ENCODE measurements at regions of chr5 and their contacts with region 1.

Region 1: GRCh38 chr5:42057254-42057690 is 132.2 kb downstream of the FBXO4 start:
- DNase-seq: peak; percentile 25
- ATAC-seq: peak; percentile 61; the same call in 1 of the 2 replicates
- H3K4me3 ChIP-seq: no peak overlapping the region
- H3K27ac ChIP-seq: no peak overlapping the region
- H3K4me1 ChIP-seq: no peaks in the 10 kb centered on the region
- H3K27me3 ChIP-seq: no peaks in the 10 kb centered on the region
- CTCF ChIP-seq: peak; percentile 61
- POLR2A ChIP-seq: no peak
- RAD21 ChIP-seq: peak; percentile 53; the same call in 1 of the 2 replicates

Region 2: DNA sequence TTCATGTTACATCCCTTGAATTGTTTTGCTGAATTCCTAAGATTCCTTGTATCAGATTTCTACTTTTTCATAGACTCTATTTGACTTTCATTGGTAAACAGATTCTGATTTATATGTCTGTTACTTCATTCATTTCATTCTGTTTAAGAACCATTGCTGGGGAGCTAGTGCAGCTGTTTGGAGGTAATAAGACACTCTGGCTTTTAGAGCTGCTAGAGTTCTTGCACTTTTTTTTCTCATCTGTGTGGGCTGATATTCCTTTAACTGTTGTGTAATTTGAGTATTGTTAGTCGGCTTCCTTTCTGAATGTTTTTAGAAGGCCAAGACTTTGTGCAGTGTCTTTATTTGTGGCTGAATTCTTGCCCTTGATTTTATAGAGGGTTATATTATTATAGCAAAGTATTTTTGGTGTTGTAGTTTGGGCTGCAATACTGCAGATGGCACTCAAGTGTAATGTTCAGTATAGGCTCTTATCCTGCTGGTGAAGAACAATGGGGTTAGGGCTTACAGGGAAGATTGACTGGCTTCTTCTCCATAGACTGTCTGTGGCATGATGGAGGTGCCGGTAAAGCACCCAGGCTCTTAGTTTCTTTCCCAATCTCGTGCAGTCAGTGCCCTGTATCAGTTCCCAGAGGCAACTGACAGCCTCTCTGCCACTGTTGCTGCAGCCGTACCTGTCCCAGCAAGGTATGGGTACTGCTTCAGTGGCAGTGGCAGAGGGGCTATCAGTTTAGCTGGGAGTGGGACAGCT is 349.2 kb before region 1 on chr5:
- CTCF ChIA-PET with region 1: interaction called, 3 read pairs
- POLR2A ChIA-PET with region 1: no interaction called
- dilution Hi-C with region 1: no loop called
- in situ Hi-C with region 1: no loop called
- intact Hi-C with region 1: loop called (anchors 10 kb)
- DNase-seq: peak; percentile 76
- ATAC-seq: peak; percentile 99
- H3K4me3 ChIP-seq: no peak overlapping the region
- H3K27ac ChIP-seq: peak overlapping the region; percentile 72; the same call in 1 of the 2 replicates
- H3K4me1 ChIP-seq: peaks cover 5% of the 10 kb centered on the region
- H3K27me3 ChIP-seq: no peaks in the 10 kb centered on the region
- CTCF ChIP-seq: peak; percentile 89
- POLR2A ChIP-seq: no peak
- RAD21 ChIP-seq: peak; percentile 87

Region 3: GRCh38 chr5:42005561-42006153 is 51.6 kb before region 1 on chr5:
- CTCF ChIA-PET with region 1: no interaction called
- POLR2A ChIA-PET with region 1: no interaction called
- dilution Hi-C with region 1: no loop called
- in situ Hi-C with region 1: no loop called
- intact Hi-C with region 1: no loop called
- DNase-seq: peak; percentile 24
- ATAC-seq: peak; percentile 64; the same call in 1 of the 2 replicates
- H3K4me3 ChIP-seq: no peak overlapping the region
- H3K27ac ChIP-seq: no peak overlapping the region
- H3K4me1 ChIP-seq: no peaks in the 10 kb centered on the region
- H3K27me3 ChIP-seq: no peaks in the 10 kb centered on the region
- CTCF ChIP-seq: peak; percentile 64
- POLR2A ChIP-seq: no peak
- RAD21 ChIP-seq: no peak